ENCODE measurements at regions of chr9 and their contacts with region 1.

Region 1: GRCh38 chr9:6230037-6230760 is 14.6 kb downstream of the IL33 start:
- DNase-seq: no peak
- ATAC-seq: no peak
- H3K4me3 ChIP-seq: no peak overlapping the region
- H3K27ac ChIP-seq: no peak overlapping the region
- H3K4me1 ChIP-seq: no peaks in the 10 kb centered on the region
- H3K27me3 ChIP-seq: no peaks in the 10 kb centered on the region
- CTCF ChIP-seq: no peak
- POLR2A ChIP-seq: no peak

Region 2: GRCh38 chr9:6194934-6195333 is 35.3 kb before region 1 on chr9:
- in situ Hi-C with region 1: no loop called
- intact Hi-C with region 1: no loop called
- DNase-seq: no peak
- ATAC-seq: no peak
- H3K4me3 ChIP-seq: no peak overlapping the region
- H3K27ac ChIP-seq: no peak overlapping the region
- H3K4me1 ChIP-seq: no peaks in the 10 kb centered on the region
- H3K27me3 ChIP-seq: no peaks in the 10 kb centered on the region
- CTCF ChIP-seq: no peak
- POLR2A ChIP-seq: no peak

Region 3: DNA sequence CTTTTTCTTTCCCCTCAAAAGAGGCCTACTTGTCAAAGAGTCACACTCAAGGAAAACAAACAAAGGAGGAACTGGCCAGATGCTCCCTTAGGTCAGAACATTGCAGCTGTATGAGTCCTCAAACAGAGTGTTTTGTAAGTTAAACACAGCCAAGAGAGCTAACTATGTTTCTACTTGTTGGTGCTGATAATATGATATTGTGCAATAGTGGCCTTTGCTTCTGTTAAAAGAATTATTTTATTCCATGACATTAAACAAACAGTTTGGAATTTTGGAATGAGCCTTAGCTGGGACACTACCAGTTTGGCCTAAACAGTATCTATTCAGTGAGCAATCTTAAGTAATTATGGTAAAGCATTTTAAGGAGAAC is 42.0 kb after region 1 on chr9:
- in situ Hi-C with region 1: no loop called
- intact Hi-C with region 1: loop called (anchors 5 kb)
- DNase-seq: peak; percentile 5 to 23
- ATAC-seq: peak; percentile 85 to 93
- H3K4me3 ChIP-seq: no peak overlapping the region
- H3K27ac ChIP-seq: peak overlapping the region in 2 of 4 donors; percentile 43 to 45
- H3K4me1 ChIP-seq: no peaks in the 10 kb centered on the region
- H3K27me3 ChIP-seq: no peaks in the 10 kb centered on the region
- CTCF ChIP-seq: no peak
- POLR2A ChIP-seq: no peak